PC-9 (cell line): ENCODE measurements at regions of chr12 and their contacts with region 1.

Region 1: DNA sequence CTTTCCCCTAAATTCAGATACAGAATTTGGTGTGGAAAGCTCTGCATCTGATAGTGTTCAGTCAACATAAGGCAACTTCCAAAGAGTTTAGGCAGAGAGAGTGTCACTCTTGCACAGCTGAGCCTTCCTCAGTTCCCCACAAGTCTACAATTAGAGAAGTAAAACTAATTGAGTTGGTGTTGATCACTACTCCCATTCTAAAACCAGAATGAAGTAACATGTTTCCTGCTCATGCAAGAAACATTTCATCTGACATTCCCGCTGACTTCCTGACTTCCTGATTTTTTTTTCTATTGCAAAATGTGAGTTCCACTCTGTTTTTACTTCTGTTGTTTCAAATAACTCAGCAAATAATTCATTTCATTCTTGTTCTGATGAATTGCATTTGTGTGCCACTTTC is 271.0 kb downstream of the ALG10B start:
- DNase-seq: no peak
- H3K4me3 ChIP-seq: no peak overlapping the region
- H3K27ac ChIP-seq: no peak overlapping the region
- H3K4me1 ChIP-seq: peaks cover 20% of the 10 kb centered on the region
- H3K27me3 ChIP-seq: no peaks in the 10 kb centered on the region
- CTCF ChIP-seq: no peak

Region 2: GRCh38 chr12:38222011-38222410 is 365.6 kb before region 1 on chr12:
- CTCF ChIA-PET with region 1: no interaction called
- POLR2A ChIA-PET with region 1: no interaction called
- intact Hi-C with region 1: no loop called
- DNase-seq: no peak
- H3K4me3 ChIP-seq: no peak overlapping the region
- H3K27ac ChIP-seq: no peak overlapping the region
- H3K4me1 ChIP-seq: no peaks in the 10 kb centered on the region; the same call in 1 of the 2 replicates
- H3K27me3 ChIP-seq: no peaks in the 10 kb centered on the region
- CTCF ChIP-seq: no peak

Region 3: GRCh38 chr12:38638406-38638805 is 50.8 kb after region 1 on chr12:
- CTCF ChIA-PET with region 1: no interaction called
- POLR2A ChIA-PET with region 1: no interaction called
- intact Hi-C with region 1: loop called (anchors 5 kb)
- DNase-seq: peak in 1 of 2 experiments; percentile 64
- H3K4me3 ChIP-seq: no peak overlapping the region
- H3K27ac ChIP-seq: no peak overlapping the region
- H3K4me1 ChIP-seq: peaks cover 34% of the 10 kb centered on the region
- H3K27me3 ChIP-seq: no peaks in the 10 kb centered on the region
- CTCF ChIP-seq: no peak